Activated T-helper 1 cell treated with anti-CD3 and anti-CD28 coated beads, Interleukin-12 subunit alpha, Interleukin-12 subunit beta, Interleukin-2, Interleukin-4 antibody, amounts not matched to agents 30 ng/mL and 10 ng/mL and 1 ng/mL, durations not matched to agents 14 hours and 24 hours and 36 hours (primary cell): ENCODE measurements at regions of chr16 and their contacts with region 1.

Region 1: DNA sequence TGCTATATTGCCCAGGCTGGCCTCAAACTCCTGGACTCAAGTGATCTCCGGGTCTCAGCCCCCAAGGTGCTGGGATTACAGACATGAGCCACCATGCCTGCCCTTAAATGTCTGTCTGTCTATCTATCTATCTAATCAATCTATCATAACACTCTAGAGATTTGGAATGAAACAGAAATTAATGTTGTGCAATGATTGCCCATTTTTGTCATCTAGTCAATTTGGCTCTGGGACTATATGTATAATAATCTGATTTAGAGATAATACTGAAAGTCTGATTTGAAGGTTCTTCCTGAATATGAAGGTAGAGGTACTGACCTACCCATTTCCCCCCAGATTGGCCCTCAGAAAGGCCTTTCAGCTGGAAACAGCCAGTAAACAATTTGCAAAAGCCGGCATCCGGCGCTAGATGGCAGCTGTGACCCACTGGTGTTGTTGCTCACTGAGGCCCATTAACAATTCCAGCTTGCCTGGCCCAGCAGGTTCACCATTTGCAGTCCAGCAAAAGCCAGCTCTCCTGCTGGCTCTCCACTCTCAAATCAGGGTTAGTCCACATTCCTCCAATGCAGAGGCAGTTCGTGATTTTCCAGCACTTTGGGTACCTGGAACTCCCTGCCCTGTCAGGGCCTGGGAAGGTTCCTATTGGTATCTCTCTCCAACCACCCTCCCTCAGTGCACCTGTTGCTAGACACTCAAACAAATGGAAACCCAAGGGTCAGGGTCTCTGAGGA is 22.9 kb upstream of the C16orf87 start:
- DNase-seq: peak; percentile 62
- H3K4me3 Mint-ChIP-seq: no peak overlapping the region
- H3K27ac Mint-ChIP-seq: no peak overlapping the region
- H3K4me1 Mint-ChIP-seq: no peaks in the 10 kb centered on the region
- H3K27me3 Mint-ChIP-seq: peaks cover 1% of the 10 kb centered on the region

Region 2: GRCh38 chr16:46822270-46822669 is 31.6 kb before region 1 on chr16:
- intact Hi-C with region 1: no loop called
- DNase-seq: no peak
- H3K4me3 Mint-ChIP-seq: no peak overlapping the region
- H3K27ac Mint-ChIP-seq: no peak overlapping the region
- H3K4me1 Mint-ChIP-seq: peaks cover 34% of the 10 kb centered on the region
- H3K27me3 Mint-ChIP-seq: no peaks in the 10 kb centered on the region

Region 3: GRCh38 chr16:46839986-46840443 is 13.9 kb before region 1 on chr16:
- intact Hi-C with region 1: no loop called
- DNase-seq: no peak
- H3K4me3 Mint-ChIP-seq: no peak overlapping the region
- H3K27ac Mint-ChIP-seq: no peak overlapping the region
- H3K4me1 Mint-ChIP-seq: peaks cover 6% of the 10 kb centered on the region
- H3K27me3 Mint-ChIP-seq: peaks cover 6% of the 10 kb centered on the region

Region 4: DNA sequence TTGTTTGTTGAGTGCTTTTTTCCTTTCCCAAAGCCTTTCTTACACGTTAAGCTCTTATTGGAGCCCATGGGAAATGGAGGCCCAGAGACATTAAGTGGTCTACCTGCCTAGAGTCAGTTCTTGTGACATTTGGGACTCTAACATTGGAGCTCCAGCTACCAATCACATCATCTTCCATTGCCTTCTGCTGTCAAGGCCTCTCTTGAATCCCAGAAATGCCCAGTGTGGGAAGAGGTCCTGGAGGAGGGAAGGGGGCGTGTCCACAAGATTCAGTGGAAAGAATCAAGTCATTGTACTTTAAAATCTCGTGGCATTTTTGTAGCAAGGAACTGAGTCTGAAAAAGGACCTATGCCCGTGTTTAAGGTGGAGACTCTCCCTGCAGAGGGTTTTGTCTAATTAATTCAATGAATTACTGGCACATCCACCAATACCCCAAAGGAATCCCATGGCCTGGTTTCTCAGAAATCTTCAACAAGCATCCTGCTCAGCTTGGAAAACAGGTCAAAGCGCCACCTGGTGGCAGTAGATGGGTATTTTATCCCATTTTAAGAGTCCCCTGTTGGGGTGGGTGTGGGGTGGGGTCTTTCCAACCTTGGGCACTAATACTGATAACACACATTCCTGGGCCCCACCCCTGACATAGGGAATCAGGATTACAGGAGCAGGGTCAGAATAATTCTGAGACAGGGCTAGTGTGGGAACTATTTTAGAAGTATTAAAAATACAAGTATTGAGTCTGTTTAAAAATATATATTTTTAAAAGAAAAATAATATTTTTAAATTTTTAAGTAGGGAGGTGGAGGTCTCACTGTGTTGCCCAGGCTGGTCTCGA is 54.9 kb after region 1 on chr16:
- intact Hi-C with region 1: loop called (anchors 1 kb)
- DNase-seq: peak; percentile 37
- H3K4me3 Mint-ChIP-seq: no peak overlapping the region
- H3K27ac Mint-ChIP-seq: peak overlapping the region; percentile 34
- H3K4me1 Mint-ChIP-seq: peaks cover 16% of the 10 kb centered on the region
- H3K27me3 Mint-ChIP-seq: no peaks in the 10 kb centered on the region

Region 5: GRCh38 chr16:46929378-46930332 is 75.8 kb after region 1 on chr16:
- intact Hi-C with region 1: loop called (anchors 1 kb)
- DNase-seq: peak; percentile 62
- H3K4me3 Mint-ChIP-seq: no peak overlapping the region
- H3K27ac Mint-ChIP-seq: no peak overlapping the region
- H3K4me1 Mint-ChIP-seq: peaks cover 11% of the 10 kb centered on the region
- H3K27me3 Mint-ChIP-seq: no peaks in the 10 kb centered on the region

Region 6: DNA sequence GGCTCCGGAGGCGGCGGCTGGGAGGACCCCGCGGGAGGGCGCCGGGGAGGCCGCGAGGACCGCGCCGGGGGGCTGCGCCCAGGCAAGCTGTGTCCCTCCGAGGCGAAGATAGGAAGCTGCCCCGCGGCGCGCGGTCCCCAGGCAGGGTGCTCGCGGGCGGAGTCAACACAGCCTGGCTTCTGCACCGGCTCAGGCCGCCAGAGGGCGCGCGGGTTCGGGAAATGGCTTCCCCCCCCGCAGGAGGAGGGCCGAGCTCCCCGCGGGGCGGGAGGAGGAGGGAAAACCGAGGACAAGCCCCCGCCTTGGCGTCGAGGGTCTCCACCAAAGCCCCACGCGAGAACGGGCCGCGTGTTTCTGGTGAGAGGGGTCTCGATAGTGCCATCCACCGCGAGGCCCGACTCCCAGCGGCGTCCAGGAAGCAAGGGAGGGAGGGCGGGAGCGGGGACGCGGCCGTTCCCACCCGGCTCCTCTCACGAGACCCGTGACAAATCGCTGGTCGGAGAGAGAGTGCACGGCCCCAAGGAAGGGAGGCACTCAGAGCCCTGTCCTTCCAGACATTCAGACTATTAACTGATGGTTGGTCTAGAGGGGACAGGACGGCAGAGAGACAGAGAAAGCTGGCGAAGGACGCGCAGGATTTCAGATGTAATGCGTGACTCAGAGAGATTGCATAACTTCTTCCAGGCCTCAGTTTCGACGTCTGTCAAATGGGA is 184.0 kb after region 1 on chr16:
- intact Hi-C with region 1: no loop called
- DNase-seq: peak; percentile 85
- H3K4me3 Mint-ChIP-seq: peak overlapping the region; percentile 81
- H3K27ac Mint-ChIP-seq: no peak overlapping the region
- H3K4me1 Mint-ChIP-seq: peaks cover 4% of the 10 kb centered on the region
- H3K27me3 Mint-ChIP-seq: peaks cover 14% of the 10 kb centered on the region